Activated B cell treated with CpG ODN at 0.5 μM for 24 hours (primary cell): ENCODE measurements at regions of chr3 and their contacts with region 1.

Region 1: DNA sequence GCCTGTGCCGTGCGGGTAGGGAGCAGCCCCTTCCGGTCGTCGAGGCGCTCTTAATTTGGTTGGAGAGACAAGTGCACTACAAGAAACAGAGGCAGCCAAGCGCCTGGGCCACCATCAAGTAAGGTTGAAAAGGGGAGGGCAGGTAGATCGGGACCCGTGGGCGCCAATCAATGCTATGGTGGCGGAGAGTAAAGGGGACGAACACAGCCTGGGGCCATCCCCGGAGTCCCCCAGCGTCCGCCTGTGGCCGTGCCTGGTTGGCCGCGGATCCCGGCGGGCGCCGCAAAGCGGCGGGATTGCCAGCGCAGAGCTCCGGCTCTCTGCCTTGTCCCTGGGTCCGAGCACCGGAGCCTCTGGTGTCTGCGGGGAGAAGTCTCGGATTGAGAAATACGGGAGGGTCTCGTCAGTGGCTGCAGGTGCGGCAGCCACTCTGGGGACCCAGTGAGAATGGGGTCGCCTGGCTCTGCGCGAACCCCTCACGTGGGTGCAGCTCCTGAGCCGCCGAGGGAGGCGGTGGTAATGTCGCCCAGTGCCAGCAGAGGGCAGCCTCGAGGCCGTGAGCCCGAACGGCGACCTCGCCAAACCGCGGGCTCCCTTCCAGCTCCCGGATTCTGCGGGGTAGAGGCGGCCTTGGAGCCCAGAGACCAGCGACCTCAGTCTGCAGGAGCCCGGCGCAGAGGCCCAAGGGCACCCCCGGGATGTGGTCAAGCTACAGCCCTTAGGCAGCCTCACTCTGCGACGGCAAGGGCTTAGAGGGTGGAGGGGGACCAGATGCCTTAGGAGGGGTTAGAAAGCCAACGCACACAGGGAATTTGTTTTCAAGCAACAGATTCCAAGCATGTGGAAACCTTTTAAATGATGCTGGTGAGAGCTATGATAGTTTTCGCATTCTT is 10.8 kb downstream of the FOXL2 start:
- DNase-seq: peak; percentile 70
- ATAC-seq: peak; percentile 89
- H3K4me3 Mint-ChIP-seq: peak overlapping the region; percentile 76
- H3K27ac Mint-ChIP-seq: no peak overlapping the region
- H3K4me1 Mint-ChIP-seq: peaks cover 35% of the 10 kb centered on the region
- H3K27me3 Mint-ChIP-seq: peaks cover 65% of the 10 kb centered on the region
- CTCF ChIP-seq: peak; percentile 67

Region 2: DNA sequence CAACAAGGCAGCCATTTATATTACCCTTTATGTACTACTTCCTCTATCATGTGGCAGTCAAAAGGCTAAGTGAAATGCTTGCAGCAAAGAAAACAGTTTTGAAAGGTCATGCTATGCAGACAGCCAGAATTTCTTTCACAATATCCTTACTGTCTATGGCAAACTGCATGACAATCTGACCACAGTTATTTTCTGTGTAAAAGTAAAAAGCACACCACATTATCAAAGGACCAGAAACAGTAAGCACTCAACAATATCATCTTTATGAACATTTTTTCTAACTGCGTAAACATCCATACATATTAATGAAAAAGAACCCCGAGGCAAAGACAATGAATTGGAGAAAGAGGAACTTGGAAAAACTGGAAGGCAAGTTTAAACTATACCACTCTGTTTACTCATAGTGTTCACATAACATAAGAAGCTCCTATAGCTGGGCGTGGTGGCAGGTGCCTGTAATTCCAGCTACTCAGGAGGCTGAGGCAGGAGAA is 149.3 kb before region 1 on chr3:
- CTCF ChIA-PET with region 1: no interaction called
- POLR2A ChIA-PET with region 1: no interaction called
- intact Hi-C with region 1: no loop called
- DNase-seq: no peak
- ATAC-seq: no peak
- H3K4me3 Mint-ChIP-seq: no peak overlapping the region
- H3K27ac Mint-ChIP-seq: no peak overlapping the region
- H3K4me1 Mint-ChIP-seq: peaks cover 5% of the 10 kb centered on the region
- H3K27me3 Mint-ChIP-seq: no peaks in the 10 kb centered on the region
- CTCF ChIP-seq: no peak

Region 3: DNA sequence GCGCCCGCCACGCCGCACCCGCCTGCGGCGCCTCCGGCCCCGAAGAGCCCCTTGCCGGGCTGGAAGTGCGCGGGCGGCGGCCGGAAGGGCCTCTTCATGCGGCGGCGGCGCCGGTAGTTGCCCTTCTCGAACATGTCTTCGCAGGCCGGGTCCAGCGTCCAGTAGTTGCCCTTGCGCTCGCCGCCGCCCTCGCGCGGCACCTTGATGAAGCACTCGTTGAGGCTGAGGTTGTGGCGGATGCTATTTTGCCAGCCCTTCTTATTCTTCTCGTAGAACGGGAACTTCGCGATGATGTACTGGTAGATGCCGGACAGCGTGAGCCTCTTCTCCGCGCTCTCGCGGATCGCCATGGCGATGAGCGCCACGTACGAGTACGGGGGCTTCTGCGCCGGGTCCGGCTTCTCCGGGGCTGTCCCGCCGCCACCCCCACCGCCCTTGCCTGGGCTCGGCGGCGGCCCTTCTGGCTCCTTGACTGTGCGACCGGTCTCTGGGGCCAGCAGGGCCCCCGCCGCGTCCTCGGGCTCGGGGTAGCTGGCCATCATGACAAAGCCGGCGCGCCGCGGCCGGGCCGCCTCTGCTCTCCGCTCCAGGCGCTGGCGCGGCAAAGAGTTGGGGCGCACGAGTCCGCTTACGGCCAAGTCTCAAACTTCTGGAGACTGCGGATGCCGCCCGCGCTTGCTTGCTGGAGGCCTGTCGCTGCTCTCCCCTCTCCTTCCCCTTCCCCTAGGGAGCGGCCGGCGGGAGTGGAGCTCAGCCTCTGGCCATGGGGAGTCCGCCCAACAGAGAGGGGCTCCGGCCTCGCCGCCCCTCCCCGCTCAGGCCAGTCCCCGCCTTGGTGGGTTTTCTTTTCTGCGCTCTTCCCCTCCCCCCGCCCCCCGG is 10.3 kb after region 1 on chr3:
- CTCF ChIA-PET with region 1: interaction called, 9 read pairs
- POLR2A ChIA-PET with region 1: no interaction called
- intact Hi-C with region 1: loop called (anchors 1 kb)
- DNase-seq: peak; percentile 26
- ATAC-seq: peak; percentile 28
- H3K4me3 Mint-ChIP-seq: peak overlapping the region; percentile 75
- H3K27ac Mint-ChIP-seq: no peak overlapping the region
- H3K4me1 Mint-ChIP-seq: peaks cover 41% of the 10 kb centered on the region
- H3K27me3 Mint-ChIP-seq: peaks cover 72% of the 10 kb centered on the region
- CTCF ChIP-seq: no peak

Region 4: DNA sequence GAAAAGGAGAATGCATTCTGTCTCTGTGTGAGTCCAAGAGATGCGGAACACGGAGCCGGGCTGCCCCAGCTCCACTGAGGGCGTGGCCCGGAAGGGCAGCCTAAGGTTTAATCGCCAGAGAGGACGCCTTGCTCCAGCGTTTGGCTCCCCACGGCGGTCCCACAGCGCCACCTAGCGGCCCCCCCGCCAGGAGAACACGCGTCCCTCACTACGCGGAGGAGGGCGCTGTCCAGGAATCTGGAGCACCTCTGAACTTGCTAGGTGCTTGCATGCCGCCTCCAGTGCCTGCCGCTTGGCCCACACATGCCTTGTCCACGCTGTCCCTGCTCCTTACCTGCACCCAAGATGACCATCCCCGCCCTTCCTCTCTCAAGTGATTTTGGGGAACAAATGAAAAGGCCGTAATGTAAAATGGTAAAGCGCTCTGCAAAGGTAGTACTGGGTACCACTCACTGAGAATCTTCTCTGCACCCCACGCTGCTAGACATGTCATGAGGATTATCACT is 393.3 kb after region 1 on chr3:
- CTCF ChIA-PET with region 1: interaction called, 9 read pairs
- POLR2A ChIA-PET with region 1: no interaction called
- intact Hi-C with region 1: loop called (anchors 1 kb)
- DNase-seq: peak; percentile 71
- ATAC-seq: peak; percentile 93
- H3K4me3 Mint-ChIP-seq: peak overlapping the region; percentile 69
- H3K27ac Mint-ChIP-seq: no peak overlapping the region
- H3K4me1 Mint-ChIP-seq: peaks cover 9% of the 10 kb centered on the region
- H3K27me3 Mint-ChIP-seq: peaks cover 26% of the 10 kb centered on the region
- CTCF ChIP-seq: peak; percentile 42